ENCODE measurements at regions of chr3 and their contacts with region 1.

Region 1: GRCh38 chr3:138712086-138712485 is 103.5 kb downstream of the FAIM start:
- DNase-seq: no peak
- ATAC-seq: no peak
- H3K4me3 ChIP-seq: no peak overlapping the region
- H3K4me3 Mint-ChIP-seq: no peak overlapping the region
- H3K27ac ChIP-seq: no peak overlapping the region
- H3K27ac Mint-ChIP-seq: no peak overlapping the region
- H3K4me1 ChIP-seq: no peaks in the 10 kb centered on the region
- H3K4me1 Mint-ChIP-seq: no peaks in the 10 kb centered on the region
- H3K27me3 ChIP-seq: no peaks in the 10 kb centered on the region
- H3K27me3 Mint-ChIP-seq: no peaks in the 10 kb centered on the region

Region 2: GRCh38 chr3:138670407-138670806 is 41.7 kb before region 1 on chr3:
- CTCF ChIA-PET with region 1: no interaction called
- POLR2A ChIA-PET with region 1: no interaction called
- DNase-seq: no peak
- ATAC-seq: no peak
- H3K4me3 ChIP-seq: no peak overlapping the region
- H3K4me3 Mint-ChIP-seq: no peak overlapping the region
- H3K27ac ChIP-seq: no peak overlapping the region
- H3K27ac Mint-ChIP-seq: no peak overlapping the region
- H3K4me1 ChIP-seq: no peaks in the 10 kb centered on the region
- H3K4me1 Mint-ChIP-seq: peaks cover 0 to 6% (median 0%) of the 10 kb centered on the region in 3 donors
- H3K27me3 ChIP-seq: no peaks in the 10 kb centered on the region
- H3K27me3 Mint-ChIP-seq: no peaks in the 10 kb centered on the region

Region 3: DNA sequence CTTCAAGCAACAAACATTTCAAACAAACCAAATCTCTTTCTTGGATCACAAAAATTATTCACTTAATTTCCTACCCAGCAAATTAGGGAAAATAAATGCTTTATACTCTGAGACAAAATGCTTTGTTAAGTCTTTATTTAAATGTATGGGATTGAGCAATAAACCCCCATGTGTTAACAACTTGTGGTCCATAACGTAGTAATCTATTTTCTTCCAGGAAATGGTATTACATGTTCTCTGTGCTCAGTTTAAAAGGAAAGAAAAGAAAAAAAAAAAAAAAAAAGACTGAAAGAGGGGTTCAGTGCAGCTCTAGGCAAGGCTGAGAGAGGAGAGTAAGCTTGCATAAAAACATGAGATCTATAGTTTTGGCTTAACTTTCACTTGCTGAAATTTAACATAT is 20.4 kb after region 1 on chr3:
- CTCF ChIA-PET with region 1: no interaction called
- POLR2A ChIA-PET with region 1: no interaction called
- DNase-seq: no peak
- ATAC-seq: no peak
- H3K4me3 ChIP-seq: no peak overlapping the region
- H3K4me3 Mint-ChIP-seq: no peak overlapping the region
- H3K27ac ChIP-seq: no peak overlapping the region
- H3K27ac Mint-ChIP-seq: no peak overlapping the region
- H3K4me1 ChIP-seq: no peaks in the 10 kb centered on the region
- H3K4me1 Mint-ChIP-seq: no peaks in the 10 kb centered on the region
- H3K27me3 ChIP-seq: no peaks in the 10 kb centered on the region
- H3K27me3 Mint-ChIP-seq: no peaks in the 10 kb centered on the region

Region 4: DNA sequence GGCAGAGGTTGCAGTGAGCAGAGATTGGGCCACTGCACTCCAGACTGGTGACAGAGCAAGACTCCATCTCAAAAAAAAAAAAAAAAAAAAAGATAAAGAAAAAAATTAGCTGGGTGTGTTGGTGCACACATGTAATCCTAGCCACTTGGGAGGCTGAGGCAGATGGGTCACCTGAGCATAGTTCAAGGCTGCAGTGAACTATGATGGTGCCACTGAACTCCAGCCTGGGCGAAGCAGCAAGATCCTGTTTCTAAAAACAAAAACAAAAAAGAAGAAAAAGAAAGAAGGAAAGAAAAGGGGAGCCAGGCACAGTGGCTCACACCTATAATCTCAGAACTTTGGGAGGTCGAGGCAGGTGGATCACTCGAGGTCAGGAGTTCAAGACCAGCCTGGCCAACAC is 89.7 kb after region 1 on chr3:
- CTCF ChIA-PET with region 1: interaction called in 1 of 2 experiments, 11 read pairs
- POLR2A ChIA-PET with region 1: no interaction called
- DNase-seq: no peak
- ATAC-seq: no peak
- H3K4me3 ChIP-seq: no peak overlapping the region
- H3K4me3 Mint-ChIP-seq: no peak overlapping the region
- H3K27ac ChIP-seq: no peak overlapping the region
- H3K27ac Mint-ChIP-seq: no peak overlapping the region
- H3K4me1 ChIP-seq: no peaks in the 10 kb centered on the region
- H3K4me1 Mint-ChIP-seq: peaks cover 39 to 43% (median 43%) of the 10 kb centered on the region in 3 donors
- H3K27me3 ChIP-seq: no peaks in the 10 kb centered on the region
- H3K27me3 Mint-ChIP-seq: no peaks in the 10 kb centered on the region

Region 5: GRCh38 chr3:138824114-138824506 is 112.0 kb after region 1 on chr3:
- CTCF ChIA-PET with region 1: no interaction called
- POLR2A ChIA-PET with region 1: no interaction called
- DNase-seq: no peak
- ATAC-seq: no peak
- H3K4me3 ChIP-seq: no peak overlapping the region
- H3K4me3 Mint-ChIP-seq: no peak overlapping the region
- H3K27ac ChIP-seq: no peak overlapping the region
- H3K27ac Mint-ChIP-seq: no peak overlapping the region
- H3K4me1 ChIP-seq: no peaks in the 10 kb centered on the region
- H3K4me1 Mint-ChIP-seq: peaks cover 23 to 36% (median 33%) of the 10 kb centered on the region in 3 donors
- H3K27me3 ChIP-seq: no peaks in the 10 kb centered on the region
- H3K27me3 Mint-ChIP-seq: no peaks in the 10 kb centered on the region

Measured in T-cell (primary cell).